Heart left ventricle (tissue), 16 donors: ENCODE measurements at regions of chr20 and their contacts with region 1.

Region 1: GRCh38 chr20:18566892-18567742 is at the start of gene SMIM26:
- DNase-seq: peak; percentile 92 to 97 (median 96)
- ATAC-seq: peak; percentile 98 to 100 (median 100)
- H3K4me3 ChIP-seq: peak within 1 kb of the TSS; percentile 64 to 83 (median 74)
- H3K27ac ChIP-seq: peak within 1 kb of the TSS; percentile 63 to 93 (median 83)
- H3K4me1 ChIP-seq: peaks cover 0 to 31% (median 6%) of the 10 kb centered on the region in 12 donors
- H3K27me3 ChIP-seq: no peaks in the 10 kb centered on the region
- CTCF ChIP-seq: no peak
- POLR2A ChIP-seq: peak in 1 of 2 donors; percentile 60
- total RNA-seq, gene SMIM26: 80.1 to 224 (median 103) TPM

Region 2: DNA sequence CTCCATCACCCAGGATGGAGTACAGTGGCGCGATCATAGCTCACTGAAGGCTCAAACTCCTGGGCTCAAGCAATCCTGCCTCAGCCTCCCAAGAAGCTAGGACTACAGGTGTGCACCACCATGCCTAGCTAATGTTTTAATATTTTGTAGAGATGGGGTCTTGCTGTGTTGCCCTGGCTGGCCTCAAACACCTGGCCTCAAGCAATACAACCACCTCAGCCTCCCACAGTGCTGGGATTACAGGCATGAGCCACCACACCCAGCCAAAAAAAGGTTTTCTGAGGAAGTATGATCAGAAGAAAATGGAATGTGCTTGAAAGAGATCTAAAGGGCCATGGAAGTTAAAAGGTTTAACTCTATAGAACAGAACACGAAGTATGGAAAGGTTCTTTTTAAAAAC is 78.8 kb before region 1 on chr20:
- intact Hi-C with region 1: no loop called
- DNase-seq: no peak
- ATAC-seq: no peak
- H3K4me3 ChIP-seq: no peak overlapping the region
- H3K27ac ChIP-seq: no peak overlapping the region
- H3K4me1 ChIP-seq: peaks cover 0 to 4% (median 0%) of the 10 kb centered on the region in 12 donors
- H3K27me3 ChIP-seq: no peaks in the 10 kb centered on the region
- CTCF ChIP-seq: no peak
- POLR2A ChIP-seq: no peak

Region 3: GRCh38 chr20:18507218-18508021 is 59.7 kb before region 1 on chr20 and contains the start of gene SEC23B:
- intact Hi-C with region 1: loop called in 4 of 10 experiments (anchors 5 kb)
- DNase-seq: peak; percentile 97 to 99 (median 97)
- ATAC-seq: peak; percentile 99
- H3K4me3 ChIP-seq: peak within 1 kb of the TSS; percentile 68 to 96 (median 77)
- H3K27ac ChIP-seq: peak within 1 kb of the TSS; percentile 91 to 99 (median 95)
- H3K4me1 ChIP-seq: peaks cover 0 to 44% (median 10%) of the 10 kb centered on the region in 12 donors
- H3K27me3 ChIP-seq: peaks cover 0 to 23% (median 0%) of the 10 kb centered on the region in 9 donors
- CTCF ChIP-seq: no peak
- POLR2A ChIP-seq: peak; percentile 11 to 68
- total RNA-seq, gene SEC23B: 8.5 to 29.2 (median 11.9) TPM

Region 4: DNA sequence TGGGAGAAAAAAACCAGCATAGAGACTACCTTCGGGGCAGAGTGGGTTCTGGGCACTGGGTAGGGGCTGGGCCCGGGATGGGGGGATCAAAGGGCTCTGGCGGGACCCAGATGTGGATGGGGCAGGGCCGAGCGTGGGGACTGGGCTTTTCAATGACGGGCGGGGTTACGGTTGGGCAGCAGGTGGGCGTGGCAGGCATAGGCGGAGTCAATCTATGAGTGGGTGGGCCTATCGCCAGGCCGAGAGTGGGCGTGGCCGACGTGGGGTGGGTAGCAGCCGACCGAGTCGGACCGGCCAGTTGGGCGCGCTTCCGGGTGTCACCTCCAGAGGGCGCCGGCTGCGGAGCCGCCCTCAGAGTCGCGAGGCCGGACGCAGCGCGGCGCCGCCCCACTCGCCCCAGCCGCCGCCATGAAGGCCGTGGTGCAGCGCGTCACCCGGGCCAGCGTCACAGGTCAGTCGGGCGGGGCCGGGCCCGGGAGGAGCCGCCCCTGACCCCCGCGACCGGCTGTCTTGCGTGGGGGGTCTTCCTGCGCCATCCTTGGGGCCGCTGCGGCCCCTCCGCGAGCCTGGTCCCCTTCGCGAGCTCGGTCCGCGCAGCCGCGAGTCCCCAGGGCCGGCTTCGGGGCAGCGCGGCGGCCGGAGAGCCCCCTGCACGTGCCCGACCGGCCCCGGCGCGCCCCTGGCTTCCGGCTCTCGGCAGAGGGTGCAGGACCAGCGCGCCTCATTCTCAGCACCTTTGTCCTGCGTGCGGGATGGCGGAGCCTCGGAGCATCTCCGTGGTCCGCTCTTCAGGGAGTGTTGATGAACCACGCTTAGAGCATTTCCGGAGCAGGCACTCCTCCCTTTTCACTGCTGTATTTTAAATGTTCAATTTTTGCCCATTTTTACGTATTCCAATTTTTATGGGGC is 20.8 kb after region 1 on chr20 and contains the start of gene DTD1:
- intact Hi-C with region 1: loop called in 2 of 10 experiments (anchors 1 kb)
- DNase-seq: peak; percentile 93 to 98 (median 96)
- ATAC-seq: peak; percentile 87 to 99 (median 98)
- H3K4me3 ChIP-seq: peak within 1 kb of the TSS; percentile 71 to 98 (median 88)
- H3K27ac ChIP-seq: peak within 1 kb of the TSS in 11 of 12 donors; percentile 65 to 90 (median 80)
- H3K4me1 ChIP-seq: peaks cover 0 to 16% (median 6%) of the 10 kb centered on the region in 12 donors
- H3K27me3 ChIP-seq: no peaks in the 10 kb centered on the region
- CTCF ChIP-seq: peak; percentile 54 to 88 (median 72)
- POLR2A ChIP-seq: peak in 1 of 2 donors; percentile 62
- total RNA-seq, gene DTD1: 12.1 to 20.8 (median 15.6) TPM

Region 5: DNA sequence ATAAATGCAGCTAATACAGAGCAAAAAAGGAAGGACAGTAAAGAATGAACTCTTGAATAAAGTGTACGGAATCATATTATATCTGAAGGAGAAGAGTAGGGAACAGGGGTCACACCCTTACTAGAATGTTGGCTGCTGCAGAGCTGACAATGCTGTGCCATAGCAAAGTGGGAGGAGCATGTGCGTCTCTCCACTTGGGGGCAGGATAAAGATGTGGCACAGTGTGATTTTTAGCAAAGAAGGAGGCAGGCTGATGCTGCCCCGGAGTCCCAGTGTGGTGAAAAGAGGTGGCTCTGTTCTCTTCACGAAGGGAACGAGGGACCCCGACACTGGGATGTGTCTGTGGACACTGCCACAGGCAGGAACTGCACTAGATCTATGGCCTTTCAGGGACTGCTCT is 1868.3 kb after region 1 on chr20:
- intact Hi-C with region 1: loop called in 1 of 10 experiments (anchors 10 kb)
- DNase-seq: no peak
- ATAC-seq: peak in 3 of 4 donors; percentile 38 to 64 (median 46)
- H3K4me3 ChIP-seq: no peak overlapping the region
- H3K27ac ChIP-seq: no peak overlapping the region
- H3K4me1 ChIP-seq: peaks cover 0 to 2% (median 0%) of the 10 kb centered on the region in 12 donors
- H3K27me3 ChIP-seq: no peaks in the 10 kb centered on the region
- CTCF ChIP-seq: peak in 2 of 12 donors; percentile 19 to 26
- POLR2A ChIP-seq: no peak